Ovary (tissue), 10 donors: ENCODE measurements at regions of chr10 and their contacts with region 1.

Region 1: DNA sequence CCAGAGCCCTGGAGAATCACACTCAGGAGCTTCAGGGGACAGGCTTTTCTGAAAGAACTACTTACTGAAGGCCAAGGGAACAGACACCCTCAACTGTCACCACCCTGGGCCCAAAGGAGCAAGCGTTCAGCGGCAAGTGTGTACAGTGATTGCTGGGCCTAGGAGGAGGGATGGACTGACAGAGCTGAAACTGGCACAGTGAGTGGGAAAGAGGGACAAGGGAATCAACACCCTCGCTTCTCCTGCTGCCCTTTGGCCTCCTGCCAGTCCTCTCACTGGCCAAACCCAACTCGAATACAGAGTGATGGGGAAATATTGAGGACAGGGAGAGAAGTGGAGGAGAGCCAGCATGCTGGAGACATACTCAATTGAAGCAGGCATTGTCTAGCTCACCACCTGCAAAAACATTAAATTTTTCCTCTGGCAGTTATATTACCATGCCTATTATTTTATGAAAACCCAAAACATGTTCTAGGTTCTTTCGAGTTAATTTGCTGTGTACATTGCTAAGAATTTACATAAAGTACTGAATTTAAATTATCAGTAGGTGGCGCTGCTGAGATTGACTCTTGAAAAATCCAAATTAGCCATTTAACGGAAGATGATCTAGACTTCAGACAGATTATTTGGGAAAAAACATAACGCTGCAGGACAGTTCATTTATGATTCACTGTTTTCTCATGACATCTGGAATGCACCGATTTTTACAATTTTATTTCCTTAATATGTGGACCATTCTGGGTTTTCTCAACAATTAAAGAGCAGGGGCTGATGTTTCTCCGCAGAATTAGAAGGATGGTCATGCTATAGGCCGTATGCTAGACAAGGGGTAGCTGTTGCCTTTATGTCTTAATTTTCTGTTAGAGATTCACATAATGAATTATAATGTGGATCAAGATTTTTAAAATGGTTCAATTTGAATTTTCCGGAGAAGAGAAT is 14.7 kb upstream of the TMEM236 start:
- DNase-seq: peak in 2 of 5 donors; percentile 27 to 35
- H3K4me3 ChIP-seq: no peak overlapping the region
- H3K27ac ChIP-seq: no peak overlapping the region
- H3K4me1 ChIP-seq: no peaks in the 10 kb centered on the region
- H3K27me3 ChIP-seq: no peaks in the 10 kb centered on the region
- CTCF ChIP-seq: peak in 2 of 3 donors; percentile 20 to 27
- EP300 ChIP-seq: no peak
- POLR2A ChIP-seq: no peak

Region 2: GRCh38 chr10:17617031-17617911 is 120.0 kb before region 1 on chr10 and contains the start of gene HACD1:
- intact Hi-C with region 1: loop called in 1 of 4 experiments (anchors 10 kb)
- DNase-seq: peak; percentile 43 to 73 (median 57)
- H3K4me3 ChIP-seq: peak within 1 kb of the TSS; percentile 75
- H3K27ac ChIP-seq: peak within 1 kb of the TSS; percentile 37 to 64
- H3K4me1 ChIP-seq: peaks cover 1% of the 10 kb centered on the region
- H3K27me3 ChIP-seq: no peaks in the 10 kb centered on the region
- CTCF ChIP-seq: no peak
- EP300 ChIP-seq: no peak
- POLR2A ChIP-seq: no peak
- total RNA-seq, gene HACD1: 6.4 to 11.7 (median 7.5) TPM

Region 3: GRCh38 chr10:17712717-17713471 is 24.4 kb before region 1 on chr10:
- intact Hi-C with region 1: no loop called
- DNase-seq: no peak
- H3K4me3 ChIP-seq: no peak overlapping the region
- H3K27ac ChIP-seq: no peak overlapping the region
- H3K4me1 ChIP-seq: no peaks in the 10 kb centered on the region
- H3K27me3 ChIP-seq: no peaks in the 10 kb centered on the region
- CTCF ChIP-seq: no peak
- EP300 ChIP-seq: no peak
- POLR2A ChIP-seq: no peak

Region 4: GRCh38 chr10:18238870-18239485 is 501.7 kb after region 1 on chr10:
- intact Hi-C with region 1: loop called in 1 of 4 experiments (anchors 10 kb)
- DNase-seq: peak in 1 of 5 donors; percentile 43
- H3K4me3 ChIP-seq: no peak overlapping the region
- H3K27ac ChIP-seq: peak overlapping the region in 1 of 2 donors; percentile 87
- H3K4me1 ChIP-seq: peaks cover 12% of the 10 kb centered on the region
- H3K27me3 ChIP-seq: no peaks in the 10 kb centered on the region
- CTCF ChIP-seq: peak; percentile 50 to 68 (median 65)
- EP300 ChIP-seq: no peak
- POLR2A ChIP-seq: no peak